Psoas muscle (tissue), 8 donors: ENCODE measurements at regions of chr4 and their contacts with region 1.

Region 1: GRCh38 chr4:185134307-185134869 is 8.7 kb upstream of the SLC25A4 start:
- DNase-seq: no peak
- ATAC-seq: peak; percentile 77 to 89 (median 81)
- H3K4me3 ChIP-seq: no peak overlapping the region
- H3K27ac ChIP-seq: no peak overlapping the region
- H3K4me1 ChIP-seq: peaks cover 13% of the 10 kb centered on the region
- H3K27me3 ChIP-seq: no peaks in the 10 kb centered on the region
- CTCF ChIP-seq: peak; percentile 84

Region 2: GRCh38 chr4:184498598-184498997 is 635.8 kb before region 1 on chr4:
- intact Hi-C with region 1: no loop called
- DNase-seq: no peak
- ATAC-seq: no peak
- H3K4me3 ChIP-seq: no peak overlapping the region
- H3K27ac ChIP-seq: no peak overlapping the region
- H3K4me1 ChIP-seq: no peaks in the 10 kb centered on the region
- H3K27me3 ChIP-seq: no peaks in the 10 kb centered on the region
- CTCF ChIP-seq: no peak

Region 3: GRCh38 chr4:185005216-185005819 is 129.1 kb before region 1 on chr4:
- intact Hi-C with region 1: loop called in 1 of 2 experiments (anchors 10 kb)
- DNase-seq: peak; percentile 80 to 90
- ATAC-seq: peak; percentile 93 to 99 (median 96)
- H3K4me3 ChIP-seq: peak overlapping the region; percentile 53
- H3K27ac ChIP-seq: no peak overlapping the region
- H3K4me1 ChIP-seq: no peaks in the 10 kb centered on the region
- H3K27me3 ChIP-seq: peaks cover 0 to 16% (median 3%) of the 10 kb centered on the region in 3 donors
- CTCF ChIP-seq: peak; percentile 95

Region 4: DNA sequence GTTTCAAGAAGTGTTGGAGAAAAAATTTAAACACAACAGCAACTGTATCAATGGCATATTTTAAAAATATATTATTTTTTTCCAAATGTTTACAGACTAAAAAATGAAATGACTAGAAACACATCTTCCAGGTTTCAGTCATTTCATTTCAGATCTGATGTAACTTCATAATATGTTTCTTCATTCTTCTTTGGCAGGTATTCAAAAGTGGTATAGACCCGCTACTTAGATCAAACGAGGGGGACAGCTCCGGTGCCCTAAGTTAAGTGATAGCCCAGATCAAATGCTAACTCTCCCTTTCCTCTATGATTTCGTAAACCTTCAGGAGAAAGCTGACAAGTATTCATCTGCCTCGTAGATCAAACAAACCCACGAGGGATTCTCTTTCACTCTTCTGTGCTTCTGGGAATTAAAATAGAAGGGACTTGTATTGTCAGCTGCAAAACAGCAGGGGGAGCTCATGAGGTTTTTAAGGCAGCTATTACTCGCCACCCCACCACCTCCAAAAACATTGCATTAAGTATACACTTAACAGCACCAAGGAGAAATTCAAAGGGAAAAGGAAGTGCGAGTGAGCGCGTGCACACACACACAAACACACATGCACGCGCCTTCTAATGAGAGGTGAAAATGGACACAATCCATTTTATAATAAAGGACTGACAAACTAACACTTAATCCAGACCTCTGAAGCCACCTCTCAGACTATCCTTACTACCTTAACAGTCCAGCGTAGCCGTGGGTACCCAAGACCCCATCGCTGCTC is 94.7 kb before region 1 on chr4:
- intact Hi-C with region 1: loop called (anchors 1 to 2 kb)
- DNase-seq: no peak
- ATAC-seq: peak; percentile 77 to 96 (median 90)
- H3K4me3 ChIP-seq: peak overlapping the region; percentile 42
- H3K27ac ChIP-seq: no peak overlapping the region
- H3K4me1 ChIP-seq: no peaks in the 10 kb centered on the region
- H3K27me3 ChIP-seq: no peaks in the 10 kb centered on the region
- CTCF ChIP-seq: peak; percentile 80

Region 5: GRCh38 chr4:185096032-185096653 is 38.2 kb before region 1 on chr4:
- intact Hi-C with region 1: loop called in 1 of 2 experiments (anchors 5 kb)
- DNase-seq: no peak
- ATAC-seq: peak in 3 of 4 donors; percentile 60 to 75 (median 69)
- H3K4me3 ChIP-seq: no peak overlapping the region
- H3K27ac ChIP-seq: no peak overlapping the region
- H3K4me1 ChIP-seq: no peaks in the 10 kb centered on the region
- H3K27me3 ChIP-seq: no peaks in the 10 kb centered on the region
- CTCF ChIP-seq: peak; percentile 65